Activated T-helper 2 cell treated with anti-CD3 and anti-CD28 coated beads, Interferon-gamma antibody, Interleukin-2, Interleukin-4, amounts not matched to agents 10 μg/mL and 5 μg/mL and 100 μg/mL, durations not matched to agents 14 hours and 24 hours and 36 hours (primary cell): ENCODE measurements at regions of chr1 and their contacts with region 1.

Region 1: DNA sequence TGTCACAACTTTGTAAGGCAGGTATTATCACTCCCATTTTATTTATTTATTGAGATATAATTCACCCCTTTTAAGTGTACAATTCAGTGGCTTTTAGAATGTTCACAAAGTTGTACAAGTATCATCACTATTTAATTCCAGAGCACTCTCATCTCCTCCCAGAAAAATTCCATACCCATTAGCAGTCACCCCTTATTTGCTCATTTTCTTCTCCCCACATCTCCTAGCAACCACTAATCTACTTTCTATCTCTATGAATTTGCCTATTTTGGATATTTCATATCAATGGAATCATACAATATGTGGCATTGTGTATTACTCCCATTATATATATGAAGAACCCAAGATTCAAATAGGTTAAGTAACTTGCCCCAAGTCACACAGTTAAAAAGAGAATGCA is 7.0 kb downstream of the DSTYK start:
- DNase-seq: no peak
- H3K4me3 Mint-ChIP-seq: peak overlapping the region; percentile 23
- H3K27ac Mint-ChIP-seq: peak overlapping the region; percentile 74
- H3K4me1 Mint-ChIP-seq: peaks cover 49% of the 10 kb centered on the region
- H3K27me3 Mint-ChIP-seq: no peaks in the 10 kb centered on the region

Region 2: DNA sequence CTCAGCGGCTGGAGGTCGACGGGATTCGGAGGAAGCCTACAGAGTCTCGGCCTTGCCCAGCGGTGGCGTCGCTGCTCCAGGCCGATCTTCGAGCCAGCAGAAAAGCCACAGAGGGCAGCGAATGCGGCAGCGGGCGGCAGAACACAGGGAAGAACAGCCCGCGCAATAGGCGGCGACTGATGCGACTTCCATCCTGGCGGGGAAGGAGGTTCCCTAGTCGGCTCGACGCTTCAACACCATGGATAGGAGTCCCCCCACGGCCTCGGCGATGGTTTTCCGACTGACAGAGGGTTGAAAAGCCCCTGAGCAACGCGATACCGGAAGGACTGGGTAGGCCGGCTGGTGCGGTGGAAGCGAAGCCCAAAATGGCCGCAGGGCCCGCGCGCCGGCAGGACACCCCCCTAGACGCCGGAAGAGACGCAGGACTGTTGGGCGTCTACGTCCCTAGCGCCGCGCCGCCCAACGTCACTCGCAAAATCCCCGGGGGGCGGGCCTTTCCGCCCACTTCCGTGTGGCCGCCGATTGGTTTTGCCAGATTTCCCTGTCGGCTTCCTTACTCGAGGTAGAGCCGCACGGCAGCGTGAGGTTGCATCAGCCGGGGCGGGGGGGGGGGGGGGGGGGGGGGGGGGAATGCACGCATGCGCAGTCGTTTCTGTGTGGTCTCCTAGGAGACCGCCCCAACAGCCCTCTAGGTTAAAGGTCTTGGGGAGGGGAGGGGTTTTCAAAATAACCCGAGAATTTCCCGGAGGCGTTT is 792.9 kb before region 1 on chr1 and contains the start of gene PPP1R15B:
- intact Hi-C with region 1: loop called (anchors 10 kb)
- DNase-seq: peak; percentile 98
- H3K4me3 Mint-ChIP-seq: peak within 1 kb of the TSS; percentile 98
- H3K27ac Mint-ChIP-seq: peak within 1 kb of the TSS; percentile 98
- H3K4me1 Mint-ChIP-seq: peaks cover 14% of the 10 kb centered on the region
- H3K27me3 Mint-ChIP-seq: no peaks in the 10 kb centered on the region
- total RNA-seq, gene PPP1R15B: 63.4 and 64.3 TPM in 2 replicates

Region 3: DNA sequence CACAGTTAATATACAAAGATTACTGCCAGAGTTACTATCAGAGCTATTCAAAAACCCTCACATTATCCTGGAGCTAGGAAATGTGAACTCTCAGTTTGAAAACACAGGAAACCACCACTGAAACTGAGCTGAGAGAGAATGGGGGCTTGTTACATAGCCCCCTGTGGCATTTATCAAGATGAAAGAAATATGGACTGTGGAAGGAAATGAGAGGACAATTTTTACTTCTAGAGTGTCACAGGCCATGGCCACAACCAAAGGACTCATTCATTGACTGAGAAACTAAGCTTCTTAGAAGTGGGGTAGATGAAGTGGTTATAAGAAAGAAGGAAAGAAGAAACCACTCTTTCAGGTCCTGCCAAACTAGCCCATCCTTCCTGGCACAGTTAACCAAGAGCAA is 18.4 kb before region 1 on chr1:
- intact Hi-C with region 1: loop called (anchors 1 kb)
- DNase-seq: no peak
- H3K4me3 Mint-ChIP-seq: no peak overlapping the region
- H3K27ac Mint-ChIP-seq: peak overlapping the region; percentile 66
- H3K4me1 Mint-ChIP-seq: peaks cover 43% of the 10 kb centered on the region
- H3K27me3 Mint-ChIP-seq: no peaks in the 10 kb centered on the region

Region 4: DNA sequence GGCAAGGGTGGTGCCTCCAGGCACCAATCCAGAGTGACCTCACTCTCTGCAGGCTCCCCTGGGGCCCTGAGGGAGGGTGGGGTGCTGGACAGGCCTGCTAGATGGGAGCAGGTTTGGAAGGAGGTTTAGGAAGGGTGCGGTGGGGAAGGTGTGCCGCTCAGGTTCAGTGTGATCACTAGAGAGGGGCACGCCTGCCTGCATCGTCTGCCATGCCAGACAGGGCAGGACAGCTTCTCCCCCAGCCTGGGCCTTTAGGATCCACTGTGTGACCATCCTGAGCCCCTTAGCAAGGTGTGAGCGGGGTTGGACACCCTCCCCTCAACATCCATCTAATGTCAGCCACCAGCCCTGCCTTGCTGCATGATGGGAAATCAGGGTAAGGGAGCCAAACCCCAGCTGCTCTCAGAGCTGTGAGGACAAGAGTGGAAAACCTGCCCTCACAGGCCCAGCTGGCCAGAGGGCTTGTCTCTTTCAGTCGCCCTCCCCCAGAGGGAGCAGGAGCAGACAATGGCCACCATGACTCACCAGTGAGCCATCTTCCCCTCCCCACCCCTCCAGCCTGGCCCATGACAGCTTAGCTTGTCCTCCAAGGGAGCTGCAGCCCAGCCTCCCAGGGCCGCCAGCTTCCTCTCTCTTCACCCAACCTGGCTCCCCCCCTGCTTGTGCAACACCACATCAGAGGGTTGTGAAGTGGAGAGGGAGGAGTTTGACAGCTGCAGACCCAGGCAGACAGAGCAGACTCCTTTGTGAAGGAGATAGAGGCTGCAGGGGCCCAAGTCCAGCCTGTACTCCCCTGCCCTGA is 80.0 kb after region 1 on chr1:
- intact Hi-C with region 1: loop called (anchors 5 kb)
- DNase-seq: peak; percentile 86
- H3K4me3 Mint-ChIP-seq: no peak overlapping the region
- H3K27ac Mint-ChIP-seq: peak overlapping the region; percentile 85
- H3K4me1 Mint-ChIP-seq: peaks cover 69% of the 10 kb centered on the region
- H3K27me3 Mint-ChIP-seq: peaks cover 13% of the 10 kb centered on the region